ENCODE measurements at regions of chr9 and their contacts with region 1.

Region 1: GRCh38 chr9:72540348-72540873 is 19.0 kb downstream of the TMC1 start:
- DNase-seq: no peak
- H3K4me3 Mint-ChIP-seq: no peak overlapping the region
- H3K27ac Mint-ChIP-seq: peak overlapping the region; percentile 31
- H3K4me1 Mint-ChIP-seq: peaks cover 42% of the 10 kb centered on the region
- H3K27me3 Mint-ChIP-seq: no peaks in the 10 kb centered on the region

Region 2: DNA sequence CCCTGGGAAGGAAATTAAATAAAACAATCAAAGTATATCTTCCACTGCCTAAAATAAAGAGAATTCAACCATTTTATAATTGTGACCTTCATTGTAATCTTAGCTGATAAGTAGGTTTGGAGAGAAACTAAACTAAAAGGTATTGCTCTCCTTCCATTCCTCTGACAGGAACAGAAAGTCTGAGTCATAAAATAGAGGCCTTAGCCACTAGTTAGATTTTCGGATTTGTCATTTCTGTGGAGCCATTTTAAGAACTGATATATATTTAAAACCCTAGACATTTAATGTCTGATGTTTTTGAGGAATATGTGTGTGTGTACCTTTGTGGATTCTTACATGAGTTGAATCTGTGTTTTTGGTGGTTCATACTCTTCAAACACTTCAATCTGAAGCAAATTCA is 30.8 kb before region 1 on chr9:
- intact Hi-C with region 1: loop called (anchors 5 kb)
- DNase-seq: no peak
- H3K4me3 Mint-ChIP-seq: peak overlapping the region; percentile 64
- H3K27ac Mint-ChIP-seq: peak overlapping the region; percentile 83
- H3K4me1 Mint-ChIP-seq: peaks cover 19% of the 10 kb centered on the region
- H3K27me3 Mint-ChIP-seq: no peaks in the 10 kb centered on the region

Region 3: DNA sequence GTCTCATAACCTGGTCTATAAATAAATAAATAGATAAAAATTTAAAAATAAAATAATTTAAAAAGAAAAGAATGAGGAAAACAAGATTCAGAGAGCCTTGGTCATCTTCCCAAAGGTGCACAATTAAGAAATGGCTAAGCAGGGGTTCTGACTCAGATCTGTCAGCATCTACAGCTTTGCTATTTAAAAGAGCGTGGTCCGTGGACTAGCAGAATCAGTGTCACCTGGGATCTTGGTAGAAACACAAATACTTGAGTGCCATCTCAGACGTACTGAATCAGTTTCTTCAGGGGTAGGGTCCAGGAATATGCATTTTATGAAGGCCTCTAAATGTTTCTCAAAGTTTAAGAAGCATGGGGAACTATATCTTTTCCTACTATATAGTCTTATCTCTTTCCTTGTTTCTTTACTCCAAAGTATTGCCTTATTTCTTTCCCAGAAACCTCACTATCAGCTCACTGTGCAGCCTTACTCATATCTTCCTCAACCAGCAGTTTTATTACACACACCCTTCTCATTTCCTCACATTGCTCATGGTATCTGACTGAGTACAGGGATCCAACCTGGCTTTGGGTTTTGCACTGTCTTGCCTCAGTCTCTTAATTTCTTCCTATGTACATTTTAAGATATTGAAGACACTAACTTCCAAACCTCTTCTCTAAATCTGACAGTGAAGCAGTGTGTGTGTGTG is 39.6 kb after region 1 on chr9:
- intact Hi-C with region 1: loop called (anchors 5 kb)
- DNase-seq: no peak
- H3K4me3 Mint-ChIP-seq: no peak overlapping the region
- H3K27ac Mint-ChIP-seq: peak overlapping the region; percentile 0
- H3K4me1 Mint-ChIP-seq: peaks cover 32% of the 10 kb centered on the region
- H3K27me3 Mint-ChIP-seq: no peaks in the 10 kb centered on the region

Measured in activated CD4-positive, alpha-beta T cell treated with anti-CD3 and anti-CD28 coated beads, Interleukin-2, amount 10 ng/mL, durations not matched to agents 24 days and 14 days (primary cell).